ENCODE measurements at regions of chr12 and their contacts with region 1.

Region 1: DNA sequence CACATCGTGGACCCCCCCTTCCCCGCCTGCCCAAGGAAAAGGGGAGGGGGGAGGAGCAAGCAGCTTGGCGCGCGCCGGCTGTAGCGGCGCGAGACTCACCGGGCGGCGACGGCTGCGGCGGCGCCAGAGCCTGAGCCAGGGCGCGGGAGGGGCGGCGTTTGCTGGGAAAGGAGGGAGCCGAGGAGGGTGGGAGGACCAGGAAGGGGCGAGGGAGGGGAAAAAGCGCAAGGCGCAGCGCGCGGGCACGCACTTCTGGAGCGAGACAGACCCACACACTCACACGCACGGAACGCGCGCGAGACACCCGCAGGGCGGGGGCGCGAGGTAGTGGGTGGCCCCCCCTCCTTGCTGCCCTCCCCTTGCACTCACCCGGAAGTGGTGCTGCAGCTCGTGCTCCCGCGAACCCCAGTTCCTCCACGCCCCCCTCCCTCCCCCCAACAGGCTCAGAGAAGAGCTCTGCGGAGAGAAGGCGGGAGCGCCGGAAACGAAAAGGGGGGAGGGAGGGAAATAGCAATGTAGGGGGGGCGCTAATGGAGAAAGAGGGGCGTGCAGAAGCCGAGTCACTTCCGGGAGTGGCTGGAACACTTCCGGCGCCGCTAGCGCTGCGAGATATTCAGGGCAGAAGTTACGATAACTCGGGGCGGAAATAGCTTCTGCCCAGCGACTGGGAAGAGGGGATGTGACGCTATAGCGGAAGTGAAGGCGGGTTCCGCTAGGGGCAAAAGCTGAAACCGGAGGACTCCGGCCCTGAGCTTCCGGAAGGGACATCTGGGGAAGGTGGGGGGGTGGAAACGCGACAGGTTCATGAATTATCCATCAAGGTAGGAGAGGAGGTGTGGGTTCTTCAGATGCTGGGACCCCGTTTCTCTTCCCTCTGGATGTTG is at the start of gene ZNF384:
- DNase-seq: peak; percentile 98
- ATAC-seq: peak; percentile 83
- H3K4me3 Mint-ChIP-seq: peak within 1 kb of the TSS; percentile 95
- H3K27ac Mint-ChIP-seq: peak within 1 kb of the TSS; percentile 94
- H3K4me1 Mint-ChIP-seq: peaks cover 51% of the 10 kb centered on the region
- H3K27me3 Mint-ChIP-seq: no peaks in the 10 kb centered on the region
- total RNA-seq, gene ZNF384: 71.9 to 76.4 TPM

Region 2: DNA sequence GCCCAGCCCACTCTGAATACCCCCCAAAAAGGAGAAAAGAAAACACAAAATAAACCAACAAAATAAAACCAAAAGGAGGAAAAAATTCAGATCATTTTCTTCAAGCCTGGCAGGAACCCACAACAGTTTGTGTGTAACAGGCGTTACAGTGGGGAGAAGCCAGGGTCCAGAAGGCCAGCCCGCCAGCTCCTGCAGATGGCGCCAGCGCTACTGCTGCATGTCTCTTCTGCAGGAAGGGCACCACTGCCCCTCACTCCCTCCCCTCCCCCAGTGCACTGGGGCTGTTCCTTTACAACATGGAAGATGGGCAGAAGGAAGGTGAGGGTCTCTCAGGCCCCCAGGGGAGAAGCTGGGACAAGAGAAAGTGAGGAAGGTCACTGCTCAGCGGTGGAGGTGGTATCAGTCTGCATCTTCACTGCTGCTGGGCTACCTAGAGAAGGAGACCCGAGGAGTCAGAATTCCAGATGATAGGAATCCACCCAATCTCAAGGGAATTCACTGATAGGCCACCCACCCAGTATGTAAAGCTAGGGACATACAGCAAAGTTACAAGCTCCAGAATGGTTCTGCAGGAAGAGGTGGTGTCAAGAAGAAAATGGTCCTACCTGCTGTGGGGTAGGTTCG is 118.9 kb before region 1 on chr12:
- CTCF ChIA-PET with region 1: interaction called, 12 read pairs
- POLR2A ChIA-PET with region 1: interaction called, 4 read pairs
- DNase-seq: peak; percentile 67
- ATAC-seq: no peak
- H3K4me3 Mint-ChIP-seq: no peak overlapping the region
- H3K27ac Mint-ChIP-seq: peak overlapping the region; percentile 60
- H3K4me1 Mint-ChIP-seq: peaks cover 40% of the 10 kb centered on the region
- H3K27me3 Mint-ChIP-seq: no peaks in the 10 kb centered on the region

Region 3: DNA sequence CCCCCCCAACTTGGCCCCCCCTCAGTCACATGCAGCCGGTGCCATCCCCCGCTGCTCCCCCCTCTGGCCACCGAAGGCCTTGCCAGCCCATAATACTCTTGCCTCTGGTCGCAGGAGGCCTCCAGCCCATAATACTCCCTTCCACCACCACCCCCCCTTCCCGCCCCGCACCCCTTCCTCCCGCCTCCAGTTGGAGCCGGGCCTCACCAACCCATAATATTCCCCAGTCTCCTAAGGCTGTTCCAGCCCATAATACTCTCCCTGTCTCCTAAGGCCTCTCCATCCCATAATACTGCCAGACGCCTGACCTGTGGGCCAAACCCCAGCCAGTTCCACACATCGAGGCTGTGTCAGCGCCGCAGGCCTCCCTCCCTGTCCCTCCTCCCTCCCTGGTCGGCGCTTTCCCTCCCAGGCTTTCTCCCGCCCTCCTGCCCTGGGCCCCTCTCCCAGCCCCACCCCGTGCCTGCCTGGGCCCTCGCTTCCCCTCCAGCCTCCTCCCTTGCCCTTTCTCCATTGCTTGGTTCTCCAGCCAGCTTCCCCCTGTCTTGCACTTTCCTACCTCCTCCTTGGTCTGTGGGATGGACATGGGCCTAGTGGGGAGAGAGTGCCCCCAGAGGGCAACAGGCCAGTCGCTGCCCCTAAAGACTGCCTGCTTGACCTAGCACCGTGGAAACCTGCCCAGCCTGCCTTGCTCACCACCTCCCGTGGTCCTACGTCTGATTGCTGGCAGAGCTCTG is 75.3 kb before region 1 on chr12:
- CTCF ChIA-PET with region 1: interaction called, 33 read pairs
- POLR2A ChIA-PET with region 1: interaction called, 11 read pairs
- DNase-seq: peak; percentile 76
- ATAC-seq: peak; percentile 40
- H3K4me3 Mint-ChIP-seq: no peak overlapping the region
- H3K27ac Mint-ChIP-seq: peak overlapping the region; percentile 79
- H3K4me1 Mint-ChIP-seq: peaks cover 62% of the 10 kb centered on the region
- H3K27me3 Mint-ChIP-seq: no peaks in the 10 kb centered on the region

Region 4: GRCh38 chr12:6632026-6632983 is 56.9 kb before region 1 on chr12:
- CTCF ChIA-PET with region 1: interaction called, 8 read pairs
- POLR2A ChIA-PET with region 1: interaction called, 10 read pairs
- DNase-seq: peak; percentile 81
- ATAC-seq: peak; percentile 66
- H3K4me3 Mint-ChIP-seq: peak overlapping the region; percentile 76
- H3K27ac Mint-ChIP-seq: peak overlapping the region; percentile 96
- H3K4me1 Mint-ChIP-seq: peaks cover 70% of the 10 kb centered on the region
- H3K27me3 Mint-ChIP-seq: no peaks in the 10 kb centered on the region

Region 5: GRCh38 chr12:6752921-6753771 is 63.9 kb after region 1 on chr12 and contains the start of gene MLF2:
- CTCF ChIA-PET with region 1: interaction called, 20 read pairs
- POLR2A ChIA-PET with region 1: interaction called, 11 read pairs
- DNase-seq: peak; percentile 99
- ATAC-seq: peak; percentile 96
- H3K4me3 Mint-ChIP-seq: peak within 1 kb of the TSS; percentile 91
- H3K27ac Mint-ChIP-seq: peak within 1 kb of the TSS; percentile 99
- H3K4me1 Mint-ChIP-seq: peaks cover 29% of the 10 kb centered on the region
- H3K27me3 Mint-ChIP-seq: peaks cover 4% of the 10 kb centered on the region
- total RNA-seq, gene MLF2: 109 to 113 TPM

Region 6: GRCh38 chr12:6851921-6852650 is 162.8 kb after region 1 on chr12 and contains the start of gene USP5:
- CTCF ChIA-PET with region 1: interaction called, 5 read pairs
- POLR2A ChIA-PET with region 1: interaction called, 31 read pairs
- DNase-seq: peak; percentile 99
- ATAC-seq: peak; percentile 83
- H3K4me3 Mint-ChIP-seq: peak within 1 kb of the TSS; percentile 90
- H3K27ac Mint-ChIP-seq: peak within 1 kb of the TSS; percentile 98
- H3K4me1 Mint-ChIP-seq: peaks cover 44% of the 10 kb centered on the region
- H3K27me3 Mint-ChIP-seq: no peaks in the 10 kb centered on the region
- total RNA-seq, gene USP5: 105 to 108 TPM

Region 7: DNA sequence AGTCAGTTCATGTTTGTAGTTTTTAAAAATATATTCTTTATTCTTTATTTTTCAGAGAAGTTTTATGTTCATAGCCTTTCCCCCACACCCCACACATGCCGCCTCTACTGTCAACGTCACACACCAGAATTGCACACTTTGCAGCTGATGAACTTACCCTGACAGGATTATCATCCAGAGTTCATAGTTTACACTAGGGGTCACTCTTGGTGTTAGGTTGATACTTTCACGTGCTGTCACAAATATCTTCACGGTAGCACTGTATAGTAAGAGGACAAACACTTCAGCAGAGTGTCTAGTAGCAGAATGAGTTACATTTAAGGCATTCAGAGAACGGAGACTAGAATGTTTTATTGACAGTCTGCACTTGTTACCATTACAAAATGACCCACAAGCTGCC is 1027.1 kb after region 1 on chr12:
- CTCF ChIA-PET with region 1: no interaction called
- POLR2A ChIA-PET with region 1: no interaction called
- DNase-seq: no peak
- ATAC-seq: no peak
- H3K4me3 Mint-ChIP-seq: no peak overlapping the region
- H3K27ac Mint-ChIP-seq: no peak overlapping the region
- H3K4me1 Mint-ChIP-seq: peaks cover 3% of the 10 kb centered on the region
- H3K27me3 Mint-ChIP-seq: peaks cover 5% of the 10 kb centered on the region